H1 (cell line): ENCODE measurements at regions of chr11 and their contacts with region 1.

Region 1: DNA sequence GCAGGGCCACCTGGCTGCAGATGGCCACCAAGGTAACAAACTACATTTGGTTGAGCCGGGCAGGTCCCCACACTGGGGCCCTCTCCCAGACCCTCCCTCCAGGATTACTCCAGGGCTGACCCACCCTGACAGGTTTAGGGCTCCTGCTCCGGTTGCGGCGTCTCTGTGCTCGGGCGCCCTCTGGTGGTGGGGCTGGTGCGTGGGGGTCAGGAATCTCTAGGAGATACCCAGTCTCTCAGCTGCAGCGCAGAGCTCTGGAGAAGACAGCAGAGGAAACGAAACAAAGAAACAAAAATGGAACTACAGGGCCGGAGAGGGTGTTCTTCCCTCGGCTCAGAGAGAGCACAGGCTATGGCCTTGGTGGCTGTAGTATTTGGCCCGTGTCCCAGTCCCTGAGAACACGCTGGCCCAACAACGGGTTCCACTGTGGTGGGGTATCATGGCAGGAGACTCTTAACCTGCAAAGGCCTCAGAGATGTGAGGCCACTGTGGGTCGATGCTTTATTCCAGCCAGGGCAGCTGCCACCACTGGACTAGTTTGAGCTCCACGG is 2.4 kb downstream of the C11orf96 start:
- DNase-seq: peak in 1 of 2 experiments; percentile 98
- H3K4me3 ChIP-seq: peak overlapping the region; percentile 38 to 75 (median 52); a peak in 5 of 8 replicates
- H3K27ac ChIP-seq: no peak overlapping the region
- H3K4me1 ChIP-seq: peaks cover 0 to 17% (median 11%) of the 10 kb centered on the region in 4 experiments; a peak in 6 of 7 replicates
- H3K27me3 ChIP-seq: peaks cover 25 to 55% (median 45%) of the 10 kb centered on the region in 4 experiments
- CTCF ChIP-seq: peak; percentile 75 to 90 (median 78)
- EP300 ChIP-seq: 0 out of 3 replicates have a peak, but pooled peaks of 1 of the 2 experiments have one; percentile 21
- POLR2A ChIP-seq: no peak
- RAD21 ChIP-seq: peak; percentile 61 to 78

Region 2: DNA sequence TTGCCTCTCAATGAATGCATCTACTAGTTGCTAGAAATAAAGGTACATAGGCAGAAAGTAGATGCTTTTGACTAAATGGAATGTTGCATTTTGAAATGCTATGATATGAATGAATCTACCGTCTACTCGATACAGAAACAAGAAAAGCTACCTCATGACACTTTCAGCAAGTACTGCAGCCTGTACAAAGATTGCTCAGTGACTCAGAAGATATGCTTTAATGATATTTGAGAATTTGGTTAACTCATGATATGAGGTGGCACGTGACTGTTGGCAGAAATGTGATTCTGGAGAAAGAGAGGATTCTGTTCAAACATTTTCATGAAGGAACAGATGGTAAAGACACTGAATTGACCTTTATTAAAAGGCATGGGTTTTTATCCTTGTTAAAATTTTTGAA is 188.3 kb before region 1 on chr11:
- CTCF ChIA-PET with region 1: no interaction called
- POLR2A ChIA-PET with region 1: no interaction called
- DNase-seq: no peak
- H3K4me3 ChIP-seq: no peak overlapping the region
- H3K27ac ChIP-seq: no peak overlapping the region
- H3K4me1 ChIP-seq: no peaks in the 10 kb centered on the region
- H3K27me3 ChIP-seq: no peaks in the 10 kb centered on the region
- CTCF ChIP-seq: no peak
- EP300 ChIP-seq: no peak
- POLR2A ChIP-seq: no peak
- RAD21 ChIP-seq: no peak

Region 3: GRCh38 chr11:43852057-43852636 is 92.7 kb before region 1 on chr11:
- CTCF ChIA-PET with region 1: no interaction called
- POLR2A ChIA-PET with region 1: no interaction called
- DNase-seq: peak; percentile 34 to 79
- H3K4me3 ChIP-seq: no peak overlapping the region
- H3K27ac ChIP-seq: no peak overlapping the region
- H3K4me1 ChIP-seq: peaks cover 0 to 5% (median 1%) of the 10 kb centered on the region in 4 experiments; a peak in 1 of 7 replicates
- H3K27me3 ChIP-seq: no peaks in the 10 kb centered on the region
- CTCF ChIP-seq: peak in 2 of 3 experiments; percentile 71 to 83; a peak in 3 of 4 replicates
- EP300 ChIP-seq: no peak
- POLR2A ChIP-seq: no peak
- RAD21 ChIP-seq: peak; percentile 91

Region 4: DNA sequence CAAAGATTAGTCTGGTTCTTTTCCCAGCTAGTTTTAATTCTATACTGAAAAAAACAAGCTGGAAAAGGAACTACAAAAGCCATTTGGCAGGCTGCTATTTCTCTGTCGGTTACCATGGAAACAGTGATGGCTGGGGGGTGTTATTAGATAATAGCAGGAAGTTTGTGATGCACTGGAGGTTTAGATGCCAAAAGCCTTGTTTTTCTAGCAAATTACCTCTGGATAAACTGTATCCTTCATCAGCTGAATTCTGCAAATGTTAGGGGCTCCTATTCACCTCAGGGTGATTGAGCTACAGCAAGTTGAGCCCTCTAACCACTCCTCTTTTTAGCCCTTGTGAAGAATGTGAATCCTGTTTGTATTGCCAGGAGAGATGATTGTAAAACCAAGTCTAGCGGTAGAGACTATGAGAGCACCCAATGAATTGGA is 39.0 kb before region 1 on chr11:
- CTCF ChIA-PET with region 1: interaction called, 42 read pairs
- POLR2A ChIA-PET with region 1: no interaction called
- DNase-seq: no peak
- H3K4me3 ChIP-seq: no peak overlapping the region
- H3K27ac ChIP-seq: no peak overlapping the region
- H3K4me1 ChIP-seq: no peaks in the 10 kb centered on the region
- H3K27me3 ChIP-seq: no peaks in the 10 kb centered on the region; a peak in 1 of 7 replicates
- CTCF ChIP-seq: no peak
- EP300 ChIP-seq: no peak
- POLR2A ChIP-seq: no peak
- RAD21 ChIP-seq: no peak

Region 5: DNA sequence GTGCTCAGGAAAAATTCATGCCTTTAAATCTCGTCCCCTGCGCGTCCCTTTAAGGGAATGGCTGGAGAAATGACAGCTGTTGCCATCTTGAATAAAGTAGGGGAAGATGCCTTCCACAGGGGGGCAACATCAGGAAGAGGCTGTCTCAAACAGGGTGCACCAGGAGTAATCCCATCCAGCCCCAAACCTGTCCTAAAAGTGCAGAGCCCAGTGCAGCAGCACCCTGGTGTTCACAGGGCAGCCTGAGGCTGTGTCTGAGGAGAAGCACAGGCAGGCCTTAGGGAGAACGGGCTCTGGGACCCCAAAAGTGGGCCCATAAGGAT is 13.2 kb before region 1 on chr11:
- CTCF ChIA-PET with region 1: interaction called, 98 read pairs
- POLR2A ChIA-PET with region 1: interaction called, 10 read pairs
- DNase-seq: no peak
- H3K4me3 ChIP-seq: no peak overlapping the region
- H3K27ac ChIP-seq: no peak overlapping the region
- H3K4me1 ChIP-seq: peaks cover 0 to 11% (median 2%) of the 10 kb centered on the region in 4 experiments; a peak in 6 of 7 replicates
- H3K27me3 ChIP-seq: peaks cover 0 to 3% (median 1%) of the 10 kb centered on the region in 4 experiments; a peak in 3 of 7 replicates
- CTCF ChIP-seq: peak; percentile 27 to 51 (median 44); a peak in 3 of 4 replicates
- EP300 ChIP-seq: no peak
- POLR2A ChIP-seq: no peak
- RAD21 ChIP-seq: peak; percentile 34 to 49

Region 6: DNA sequence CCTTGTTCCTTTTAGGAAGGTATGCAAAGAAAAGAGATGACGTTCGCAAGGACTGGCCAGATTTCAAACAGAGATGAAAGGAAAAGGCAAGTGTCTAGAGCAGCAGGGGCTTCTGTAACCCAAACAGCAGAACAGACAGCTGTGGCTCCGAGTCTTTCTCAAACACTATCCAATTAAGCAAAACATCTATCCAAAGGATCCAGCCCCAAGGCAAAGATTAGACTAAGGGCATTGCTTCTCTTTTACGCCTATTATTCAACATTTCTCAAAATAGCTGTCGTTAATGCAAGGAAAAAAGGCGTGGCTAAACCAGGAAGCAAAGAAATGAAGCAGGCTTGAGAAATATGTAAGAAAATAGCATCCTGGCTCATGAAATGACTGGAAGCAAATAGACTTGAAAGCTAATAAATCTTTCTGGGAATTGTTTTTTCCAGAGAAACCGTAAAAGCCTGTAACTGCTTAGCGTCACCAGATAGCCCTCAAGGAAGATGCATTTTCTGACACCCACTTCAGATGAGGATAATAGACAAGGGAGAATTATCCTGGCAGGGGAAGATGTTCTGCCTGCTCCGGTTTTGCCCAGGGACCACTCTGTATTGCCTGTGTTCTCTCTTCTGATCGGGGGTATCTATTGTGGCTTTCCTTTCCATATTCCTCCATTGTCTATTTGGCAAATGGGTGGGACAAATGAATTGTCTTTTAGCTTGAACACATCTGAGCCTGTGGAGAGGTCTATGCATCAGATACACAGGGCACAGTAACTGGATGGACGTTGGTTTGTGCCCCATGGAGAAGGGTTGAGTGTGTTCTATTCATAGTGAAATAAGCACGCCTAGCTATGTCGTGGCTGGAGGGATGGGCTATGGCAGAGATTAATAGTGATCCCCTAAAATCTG is 17.8 kb after region 1 on chr11:
- CTCF ChIA-PET with region 1: interaction called, 140 read pairs
- POLR2A ChIA-PET with region 1: interaction called, 4 read pairs
- DNase-seq: no peak
- H3K4me3 ChIP-seq: no peak overlapping the region
- H3K27ac ChIP-seq: no peak overlapping the region
- H3K4me1 ChIP-seq: peaks cover 3 to 12% (median 6%) of the 10 kb centered on the region in 4 experiments
- H3K27me3 ChIP-seq: no peaks in the 10 kb centered on the region
- CTCF ChIP-seq: no peak
- EP300 ChIP-seq: no peak
- POLR2A ChIP-seq: no peak
- RAD21 ChIP-seq: no peak

Region 7: GRCh38 chr11:44005063-44005701 is 60.3 kb after region 1 on chr11:
- CTCF ChIA-PET with region 1: interaction called, 52 read pairs
- POLR2A ChIA-PET with region 1: interaction called, 3 read pairs
- DNase-seq: peak in 1 of 2 experiments; percentile 52
- H3K4me3 ChIP-seq: no peak overlapping the region
- H3K27ac ChIP-seq: no peak overlapping the region
- H3K4me1 ChIP-seq: peaks cover 0 to 18% (median 7%) of the 10 kb centered on the region in 4 experiments; a peak in 6 of 7 replicates
- H3K27me3 ChIP-seq: peaks cover 0 to 2% (median 0%) of the 10 kb centered on the region in 4 experiments; a peak in 1 of 7 replicates
- CTCF ChIP-seq: no peak
- EP300 ChIP-seq: no peak
- POLR2A ChIP-seq: no peak
- RAD21 ChIP-seq: no peak

Region 8: DNA sequence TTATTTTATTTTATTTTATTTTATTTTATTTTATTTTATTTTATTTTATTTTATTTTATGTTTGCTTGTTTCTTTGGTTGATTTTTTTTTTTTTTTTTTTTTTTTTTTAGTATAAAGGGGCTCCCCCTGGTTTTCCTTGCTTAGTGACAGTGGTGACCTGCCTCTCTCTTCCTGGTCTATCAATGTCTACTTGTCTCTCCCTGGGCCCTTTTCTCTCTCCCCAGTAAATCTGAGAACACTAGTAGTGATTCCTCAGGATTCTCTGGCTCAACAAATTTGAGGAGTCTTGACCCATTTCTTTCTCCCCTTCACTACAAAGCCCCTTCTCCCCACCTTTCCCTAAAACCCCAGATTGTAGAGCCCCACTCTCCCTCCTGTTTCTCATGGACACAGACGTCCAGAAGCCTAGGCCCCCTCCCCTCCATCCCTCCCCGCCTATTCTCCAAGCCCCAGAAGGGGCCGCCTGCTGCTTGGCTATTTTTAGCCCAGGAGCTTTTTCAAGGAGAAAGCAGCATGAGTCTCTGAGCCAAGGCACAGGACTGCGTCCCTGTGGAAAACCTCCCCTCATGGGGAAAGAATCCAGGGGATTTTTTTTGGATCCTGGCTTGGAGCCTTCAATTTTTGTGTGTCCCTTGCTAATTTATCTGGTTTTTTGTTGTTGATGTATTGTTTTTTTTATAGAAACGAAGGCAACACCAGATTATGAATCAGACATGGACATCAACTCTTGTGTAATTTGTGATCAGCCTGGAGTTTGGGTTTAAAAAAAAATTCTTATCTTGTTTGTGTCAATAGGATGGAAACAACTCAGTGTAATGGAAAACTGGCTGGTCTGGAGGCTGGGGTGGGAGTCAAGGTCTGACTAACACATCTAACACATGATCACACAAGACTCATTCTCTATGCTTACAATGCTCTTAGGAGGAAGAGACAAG is 85.4 kb after region 1 on chr11:
- CTCF ChIA-PET with region 1: interaction called, 43 read pairs
- POLR2A ChIA-PET with region 1: interaction called, 7 read pairs
- DNase-seq: peak in 1 of 2 experiments; percentile 45
- H3K4me3 ChIP-seq: peak overlapping the region in 1 of 4 experiments; percentile 31; a peak in 1 of 8 replicates
- H3K27ac ChIP-seq: no peak overlapping the region
- H3K4me1 ChIP-seq: peaks cover 0 to 11% (median 4%) of the 10 kb centered on the region in 4 experiments; a peak in 6 of 7 replicates
- H3K27me3 ChIP-seq: no peaks in the 10 kb centered on the region
- CTCF ChIP-seq: no peak
- EP300 ChIP-seq: no peak
- POLR2A ChIP-seq: no peak
- RAD21 ChIP-seq: 0 out of 4 replicates have a peak, but pooled peaks of 1 of the 2 experiments have one; percentile 3